Colonic mucosa (tissue), 4 donors: ENCODE measurements at regions of chr1 and their contacts with region 1.

Region 1: DNA sequence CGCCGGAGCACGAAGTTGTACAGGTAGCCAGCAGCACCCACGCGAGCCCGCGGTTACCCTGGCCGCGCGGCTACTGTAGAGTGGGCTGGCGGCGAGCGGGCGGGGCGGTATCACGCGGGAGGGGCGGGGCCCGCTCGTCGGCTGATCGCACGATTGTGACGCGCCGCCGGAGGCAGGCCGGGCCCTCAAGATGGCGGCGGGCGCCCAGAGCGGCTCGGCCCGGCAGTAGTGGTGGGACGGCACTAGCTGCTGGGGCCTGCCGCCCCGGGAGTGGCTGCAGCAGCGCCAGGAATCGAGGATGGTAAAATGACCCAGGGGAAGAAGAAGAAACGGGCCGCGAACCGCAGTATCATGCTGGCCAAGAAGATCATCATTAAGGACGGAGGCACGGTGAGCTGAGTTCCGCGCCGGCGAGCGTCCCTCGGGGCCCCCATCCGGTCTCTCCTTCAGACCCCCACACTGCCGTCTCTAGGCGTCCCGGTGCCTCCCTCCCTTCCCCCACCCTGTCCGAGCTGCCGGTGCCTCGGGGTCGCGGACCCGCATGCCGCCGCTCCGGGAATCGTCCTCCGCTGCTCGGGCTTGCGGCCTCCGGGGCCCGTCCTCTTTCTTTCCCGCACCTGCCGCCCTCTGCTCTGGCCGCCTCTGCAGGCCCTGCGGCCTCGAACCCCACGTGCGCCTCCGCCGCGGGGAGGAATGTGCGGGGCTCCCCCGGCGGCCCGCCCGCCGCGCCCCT is 68.3 kb downstream of the SLC35A3 start:
- DNase-seq: peak; percentile 88
- H3K4me3 ChIP-seq: peak overlapping the region; percentile 73
- H3K27ac ChIP-seq: peak overlapping the region; percentile 98
- H3K4me1 ChIP-seq: peaks cover 12% of the 10 kb centered on the region
- H3K27me3 ChIP-seq: no peaks in the 10 kb centered on the region
- CTCF ChIP-seq: no peak

Region 2: GRCh38 chr1:99808391-99809115 is 229.5 kb before region 1 on chr1:
- intact Hi-C with region 1: loop called (anchors 10 kb)
- DNase-seq: peak; percentile 56
- H3K4me3 ChIP-seq: no peak overlapping the region
- H3K27ac ChIP-seq: no peak overlapping the region
- H3K4me1 ChIP-seq: no peaks in the 10 kb centered on the region
- H3K27me3 ChIP-seq: no peaks in the 10 kb centered on the region
- CTCF ChIP-seq: peak; percentile 45

Region 3: GRCh38 chr1:99969729-99970621 is 68.1 kb before region 1 on chr1 and contains the start of gene SLC35A3:
- intact Hi-C with region 1: loop called (anchors 10 kb)
- DNase-seq: peak; percentile 87
- H3K4me3 ChIP-seq: peak within 1 kb of the TSS; percentile 92
- H3K27ac ChIP-seq: peak within 1 kb of the TSS; percentile 96
- H3K4me1 ChIP-seq: peaks cover 11% of the 10 kb centered on the region
- H3K27me3 ChIP-seq: no peaks in the 10 kb centered on the region
- CTCF ChIP-seq: no peak
- total RNA-seq, gene SLC35A3: 122 to 206 TPM

Region 4: DNA sequence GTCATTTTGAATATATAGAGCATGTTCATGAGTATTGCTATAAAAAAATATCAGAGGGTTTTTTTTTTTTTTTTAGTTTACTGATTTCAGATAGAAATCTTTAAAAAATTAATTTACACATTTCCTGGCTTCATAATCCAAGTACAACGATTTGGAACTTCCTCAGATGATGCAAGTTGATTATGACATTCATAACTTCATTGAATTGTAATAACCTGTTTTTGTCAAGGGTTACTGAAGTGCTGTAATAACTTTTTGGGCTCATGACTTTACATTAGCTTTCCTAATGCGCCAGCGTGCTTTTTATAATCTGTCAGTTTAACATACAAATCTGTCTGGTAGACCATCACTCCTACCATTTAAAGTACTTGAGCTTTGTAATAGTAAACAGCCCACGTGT is 13.3 kb after region 1 on chr1:
- intact Hi-C with region 1: no loop called
- DNase-seq: no peak
- H3K4me3 ChIP-seq: no peak overlapping the region
- H3K27ac ChIP-seq: no peak overlapping the region
- H3K4me1 ChIP-seq: no peaks in the 10 kb centered on the region
- H3K27me3 ChIP-seq: no peaks in the 10 kb centered on the region
- CTCF ChIP-seq: no peak

Region 5: GRCh38 chr1:100090471-100090870 is 52.4 kb after region 1 on chr1:
- intact Hi-C with region 1: no loop called
- DNase-seq: no peak
- H3K4me3 ChIP-seq: no peak overlapping the region
- H3K27ac ChIP-seq: no peak overlapping the region
- H3K4me1 ChIP-seq: no peaks in the 10 kb centered on the region
- H3K27me3 ChIP-seq: no peaks in the 10 kb centered on the region
- CTCF ChIP-seq: no peak